ENCODE measurements at regions of chr1 and their contacts with region 1.

Region 1: GRCh38 chr1:228082135-228082891 is at the start of gene ARF1:
- DNase-seq: peak; percentile 92
- ATAC-seq: peak; percentile 89
- H3K4me3 Mint-ChIP-seq: peak within 1 kb of the TSS; percentile 94
- H3K27ac Mint-ChIP-seq: peak within 1 kb of the TSS; percentile 98
- H3K4me1 Mint-ChIP-seq: peaks cover 47% of the 10 kb centered on the region
- H3K27me3 Mint-ChIP-seq: no peaks in the 10 kb centered on the region
- total RNA-seq, gene ARF1: 313 to 322 TPM

Region 2: DNA sequence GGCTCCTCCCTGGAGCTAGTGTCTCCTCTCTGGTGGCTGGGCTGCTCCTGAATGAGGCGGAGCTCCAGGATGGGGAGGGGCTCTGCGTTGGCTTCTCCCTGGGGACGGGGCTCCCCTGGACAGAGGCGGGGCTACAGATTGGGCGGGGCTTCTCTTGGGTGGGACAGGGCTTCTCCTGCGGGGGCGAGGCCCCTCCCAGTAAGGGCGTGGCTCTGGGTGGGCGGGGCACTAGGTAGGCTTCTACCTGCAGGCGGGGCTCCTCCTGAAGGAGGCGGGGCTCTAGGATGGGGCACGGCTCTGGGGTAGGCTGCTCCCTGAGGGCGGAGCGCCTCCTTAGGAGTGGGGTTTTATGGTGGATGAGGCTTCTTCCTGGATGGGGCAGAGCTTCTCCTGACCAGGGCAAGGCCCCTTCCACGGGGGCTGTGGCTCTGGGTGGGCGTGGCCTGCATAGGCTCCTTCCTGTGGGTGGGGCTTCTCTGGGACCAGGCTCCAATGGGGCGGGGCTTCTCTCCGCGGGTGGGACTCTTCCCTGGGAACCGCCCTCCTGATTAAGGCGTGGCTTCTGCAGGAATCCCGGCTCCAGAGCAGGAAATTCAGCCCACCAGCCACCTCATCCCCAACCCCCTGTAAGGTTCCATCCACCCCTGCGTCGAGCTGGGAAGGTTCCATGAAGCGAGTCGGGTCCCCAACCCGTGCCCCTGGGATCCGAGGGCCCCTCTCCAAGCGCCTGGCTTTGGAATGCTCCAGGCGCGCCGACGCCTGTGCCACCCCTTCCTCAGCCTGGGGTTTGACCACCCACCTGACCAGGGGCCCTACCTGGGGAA is 22.5 kb before region 1 on chr1:
- CTCF ChIA-PET with region 1: no interaction called
- POLR2A ChIA-PET with region 1: interaction called, 17 read pairs
- DNase-seq: peak; percentile 73
- ATAC-seq: peak; percentile 70
- H3K4me3 Mint-ChIP-seq: peak overlapping the region; percentile 55
- H3K27ac Mint-ChIP-seq: no peak overlapping the region
- H3K4me1 Mint-ChIP-seq: peaks cover 7% of the 10 kb centered on the region
- H3K27me3 Mint-ChIP-seq: peaks cover 50% of the 10 kb centered on the region

Region 3: GRCh38 chr1:228101994-228102790 is 19.9 kb after region 1 on chr1:
- CTCF ChIA-PET with region 1: interaction called, 4 read pairs
- POLR2A ChIA-PET with region 1: interaction called, 25 read pairs
- DNase-seq: peak; percentile 67
- ATAC-seq: peak; percentile 47
- H3K4me3 Mint-ChIP-seq: peak overlapping the region; percentile 80
- H3K27ac Mint-ChIP-seq: peak overlapping the region; percentile 82
- H3K4me1 Mint-ChIP-seq: peaks cover 31% of the 10 kb centered on the region
- H3K27me3 Mint-ChIP-seq: no peaks in the 10 kb centered on the region

Region 4: GRCh38 chr1:228109073-228109961 is 27.0 kb after region 1 on chr1 and contains the start of gene MRPL55:
- CTCF ChIA-PET with region 1: no interaction called
- POLR2A ChIA-PET with region 1: interaction called, 16 read pairs
- DNase-seq: peak; percentile 98
- ATAC-seq: peak; percentile 95
- H3K4me3 Mint-ChIP-seq: peak within 1 kb of the TSS; percentile 92
- H3K27ac Mint-ChIP-seq: peak within 1 kb of the TSS; percentile 96
- H3K4me1 Mint-ChIP-seq: peaks cover 41% of the 10 kb centered on the region
- H3K27me3 Mint-ChIP-seq: no peaks in the 10 kb centered on the region
- total RNA-seq, gene MRPL55: 51.1 to 60.7 TPM